ENCODE measurements at regions of chr7 and their contacts with region 1.

Region 1: GRCh38 chr7:332646-333392 is 42.8 kb downstream of the FOXL3 start:
- DNase-seq: no peak
- H3K4me3 ChIP-seq: peak overlapping the region; percentile 3; the same call in 1 of the 2 replicates
- CTCF ChIP-seq: peak; percentile 84

Region 2: GRCh38 chr7:184294-185264 is 148.2 kb before region 1 on chr7:
- CTCF ChIA-PET with region 1: no interaction called
- POLR2A ChIA-PET with region 1: no interaction called
- DNase-seq: no peak
- H3K4me3 ChIP-seq: no peak overlapping the region
- CTCF ChIP-seq: no peak

Region 3: DNA sequence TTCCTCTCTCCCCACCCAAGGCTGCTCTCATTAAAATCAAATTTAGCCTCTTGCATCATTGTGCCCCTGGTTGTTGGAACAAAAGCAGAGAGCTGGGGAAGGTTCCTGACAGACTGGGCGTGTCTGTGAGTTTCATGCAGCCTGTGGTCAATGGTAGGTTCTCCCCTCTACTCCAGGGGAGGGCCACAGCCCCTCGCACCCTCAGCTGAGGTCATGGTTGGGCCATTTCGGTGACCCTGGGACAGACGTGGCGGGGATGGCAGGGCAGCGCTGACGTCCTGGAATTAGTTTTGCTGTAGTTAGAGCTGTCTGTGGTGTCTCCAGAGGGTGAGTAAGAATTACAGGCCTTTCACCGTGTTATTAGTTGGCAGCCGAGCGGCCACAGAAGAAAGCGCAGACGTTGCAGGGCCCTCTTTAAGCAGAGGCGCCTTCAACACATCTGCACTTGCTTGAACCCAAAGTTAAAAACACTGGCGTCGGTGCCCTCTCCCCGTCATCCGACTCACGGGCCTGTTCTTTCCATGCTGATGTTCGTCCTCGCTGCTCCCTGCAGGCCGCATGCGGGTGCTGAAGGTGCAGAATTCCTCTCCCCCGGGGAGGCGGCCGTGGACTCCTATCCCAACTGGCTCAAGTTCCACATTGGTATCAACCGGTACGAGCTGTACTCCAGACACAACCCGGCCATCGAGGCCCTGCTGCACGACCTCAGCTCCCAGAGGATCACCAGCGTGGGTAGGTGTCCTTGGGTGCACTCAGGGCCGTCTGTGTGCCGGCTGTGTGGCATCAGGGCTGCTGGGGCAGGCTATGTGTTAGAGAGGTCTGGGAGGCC is 137.6 kb before region 1 on chr7:
- CTCF ChIA-PET with region 1: no interaction called
- POLR2A ChIA-PET with region 1: no interaction called
- DNase-seq: no peak
- H3K4me3 ChIP-seq: peak overlapping the region; percentile 68
- CTCF ChIP-seq: no peak

Region 4: DNA sequence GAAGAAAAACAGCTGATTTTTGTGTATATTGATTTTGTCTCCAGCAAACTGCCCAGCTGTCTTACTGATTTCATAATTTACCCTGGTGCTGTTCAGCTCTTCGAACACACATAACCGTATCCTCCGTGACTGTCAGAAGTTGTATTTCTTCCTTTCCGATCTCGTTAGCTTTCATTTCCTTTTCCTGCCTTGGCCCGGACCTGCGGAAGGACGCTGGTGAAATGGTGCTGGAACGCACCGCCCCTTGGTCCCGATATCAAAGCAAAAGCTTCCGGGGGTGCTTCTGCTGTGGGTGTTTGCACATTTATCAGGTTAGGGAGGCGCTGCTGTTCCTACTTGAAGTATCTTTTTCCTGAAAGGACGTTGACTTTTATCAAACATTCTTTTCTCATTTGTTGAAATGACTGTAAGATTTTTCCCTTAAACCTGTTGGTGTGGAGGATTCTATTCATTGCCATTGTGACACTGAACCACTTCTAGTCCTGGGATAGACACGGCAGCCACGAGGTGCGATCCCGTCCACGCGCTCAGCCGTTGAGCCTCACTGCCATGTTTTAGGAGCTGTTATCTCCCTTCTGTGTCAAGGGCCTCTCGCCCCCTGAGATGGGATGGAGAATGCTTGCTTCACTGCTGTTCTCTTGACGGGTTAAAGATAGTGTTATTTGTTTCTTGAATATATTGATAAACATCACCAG is 29.7 kb after region 1 on chr7:
- CTCF ChIA-PET with region 1: no interaction called
- POLR2A ChIA-PET with region 1: no interaction called
- DNase-seq: no peak
- H3K4me3 ChIP-seq: peak overlapping the region; percentile 25
- CTCF ChIP-seq: no peak

Region 5: GRCh38 chr7:514651-515598 is 182.1 kb after region 1 on chr7:
- CTCF ChIA-PET with region 1: interaction called, 18 read pairs
- POLR2A ChIA-PET with region 1: no interaction called
- DNase-seq: no peak
- H3K4me3 ChIP-seq: no peak overlapping the region
- CTCF ChIP-seq: no peak

Region 6: DNA sequence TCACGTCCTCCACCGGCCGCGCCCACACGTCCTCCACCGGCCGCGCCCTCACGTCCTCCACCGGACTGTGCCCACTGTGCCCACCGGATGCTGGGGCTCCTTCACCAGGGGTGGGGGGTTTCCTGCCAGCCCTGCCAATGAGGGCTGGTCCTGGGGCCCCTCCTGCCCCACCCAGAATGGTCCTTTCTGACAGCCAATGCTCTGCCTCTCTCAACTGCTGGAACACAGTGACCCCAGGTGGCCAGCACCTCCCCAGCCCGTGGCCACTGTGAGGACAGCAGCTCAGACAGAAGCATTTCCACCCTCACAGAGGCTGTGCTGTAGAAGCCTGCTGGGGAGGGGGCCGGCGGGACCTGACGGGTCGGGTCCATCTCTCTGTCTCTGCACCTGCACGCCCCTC is 303.6 kb after region 1 on chr7:
- CTCF ChIA-PET with region 1: interaction called, 25 read pairs
- POLR2A ChIA-PET with region 1: no interaction called
- DNase-seq: no peak
- H3K4me3 ChIP-seq: no peak overlapping the region
- CTCF ChIP-seq: peak; percentile 51

Region 7: DNA sequence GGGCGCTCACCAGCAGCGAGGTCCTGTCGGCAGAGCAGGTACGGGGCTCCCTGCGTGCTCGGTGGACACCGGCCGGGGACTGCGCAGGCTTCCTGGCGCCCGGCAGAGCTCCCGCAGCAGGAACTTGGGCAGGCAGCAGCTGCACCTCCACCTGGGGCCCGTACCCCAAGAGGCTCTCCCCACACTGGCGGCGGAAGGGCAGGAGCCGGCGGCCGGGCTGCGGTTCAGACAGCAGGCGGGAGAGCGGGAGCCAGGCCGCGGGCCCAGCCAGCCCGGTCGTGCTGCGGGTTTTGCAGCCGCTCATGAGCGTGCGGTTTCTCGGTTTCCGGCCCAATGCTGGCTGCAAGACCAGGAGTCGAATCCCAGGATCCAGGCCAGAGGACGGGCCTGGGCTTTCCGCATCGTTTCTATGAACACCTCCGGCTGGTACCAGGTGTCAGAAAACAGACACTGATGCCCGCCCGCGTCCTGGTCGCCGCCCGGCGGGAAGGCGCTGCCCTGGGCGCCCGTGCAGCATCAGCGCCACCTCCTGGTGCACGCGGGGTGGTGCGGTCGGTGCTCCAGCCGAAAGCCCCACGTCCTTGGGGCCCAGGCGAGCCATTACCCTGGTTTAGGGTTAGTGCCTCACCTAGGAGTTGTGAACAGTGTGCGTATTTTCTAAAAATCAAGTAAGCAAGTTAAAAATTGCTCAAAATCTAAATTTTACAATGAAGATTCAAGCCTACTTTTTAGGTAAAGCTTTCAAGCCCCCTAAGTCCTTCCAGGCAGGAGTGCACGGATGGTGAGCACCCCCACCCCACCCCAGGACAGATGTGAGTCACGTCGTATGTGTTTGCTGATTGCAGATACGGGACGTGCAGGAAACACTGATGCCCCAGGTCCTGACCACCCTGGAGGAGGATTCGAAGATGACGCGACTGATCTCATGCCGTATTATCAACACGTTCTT is 441.6 kb after region 1 on chr7:
- CTCF ChIA-PET with region 1: interaction called, 51 read pairs
- POLR2A ChIA-PET with region 1: no interaction called
- DNase-seq: no peak
- H3K4me3 ChIP-seq: no peak overlapping the region
- CTCF ChIP-seq: peak; percentile 97

Region 8: GRCh38 chr7:816300-816750 is 483.5 kb after region 1 on chr7:
- CTCF ChIA-PET with region 1: no interaction called
- POLR2A ChIA-PET with region 1: no interaction called
- DNase-seq: peak; percentile 65
- H3K4me3 ChIP-seq: peak overlapping the region; percentile 78
- CTCF ChIP-seq: no peak